Left ventricle myocardium inferior (tissue), 1 donor: ENCODE measurements at regions of chr18 and their contacts with region 1.

Region 1: DNA sequence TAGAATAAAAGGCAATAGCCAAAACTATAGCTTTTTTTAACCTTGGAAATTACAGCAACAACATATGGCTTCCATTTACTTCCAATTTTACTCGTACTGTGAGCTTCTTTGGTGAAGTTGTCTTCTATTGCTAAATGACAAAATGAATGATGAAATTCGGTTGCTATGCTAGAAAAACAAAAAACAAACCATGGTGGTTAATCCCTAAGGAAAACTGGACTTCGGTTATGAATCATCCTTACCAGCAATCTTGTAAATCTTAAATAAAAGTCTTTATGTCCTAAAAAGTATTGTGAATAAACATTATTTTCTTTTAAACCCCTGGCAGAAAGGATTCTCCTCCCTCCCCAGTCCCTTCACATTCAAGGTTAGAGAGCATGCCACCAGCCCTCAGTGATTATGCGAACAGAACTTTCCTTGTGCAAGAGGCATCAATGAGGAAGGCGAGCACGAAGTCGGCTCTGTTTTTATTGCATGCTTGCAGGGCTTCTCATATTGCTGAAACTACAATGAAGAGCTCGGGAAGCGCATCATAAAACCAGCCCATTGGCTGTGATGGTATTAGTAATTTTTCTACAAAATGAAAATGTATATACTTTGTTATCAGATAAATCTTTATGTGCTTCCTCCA is 62.9 kb downstream of the ZNF521 start:
- DNase-seq: no peak
- H3K4me3 ChIP-seq: no peak overlapping the region
- H3K27ac ChIP-seq: peak overlapping the region; percentile 87
- H3K4me1 ChIP-seq: peaks cover 53% of the 10 kb centered on the region
- H3K27me3 ChIP-seq: no peaks in the 10 kb centered on the region
- CTCF ChIP-seq: no peak

Region 2: DNA sequence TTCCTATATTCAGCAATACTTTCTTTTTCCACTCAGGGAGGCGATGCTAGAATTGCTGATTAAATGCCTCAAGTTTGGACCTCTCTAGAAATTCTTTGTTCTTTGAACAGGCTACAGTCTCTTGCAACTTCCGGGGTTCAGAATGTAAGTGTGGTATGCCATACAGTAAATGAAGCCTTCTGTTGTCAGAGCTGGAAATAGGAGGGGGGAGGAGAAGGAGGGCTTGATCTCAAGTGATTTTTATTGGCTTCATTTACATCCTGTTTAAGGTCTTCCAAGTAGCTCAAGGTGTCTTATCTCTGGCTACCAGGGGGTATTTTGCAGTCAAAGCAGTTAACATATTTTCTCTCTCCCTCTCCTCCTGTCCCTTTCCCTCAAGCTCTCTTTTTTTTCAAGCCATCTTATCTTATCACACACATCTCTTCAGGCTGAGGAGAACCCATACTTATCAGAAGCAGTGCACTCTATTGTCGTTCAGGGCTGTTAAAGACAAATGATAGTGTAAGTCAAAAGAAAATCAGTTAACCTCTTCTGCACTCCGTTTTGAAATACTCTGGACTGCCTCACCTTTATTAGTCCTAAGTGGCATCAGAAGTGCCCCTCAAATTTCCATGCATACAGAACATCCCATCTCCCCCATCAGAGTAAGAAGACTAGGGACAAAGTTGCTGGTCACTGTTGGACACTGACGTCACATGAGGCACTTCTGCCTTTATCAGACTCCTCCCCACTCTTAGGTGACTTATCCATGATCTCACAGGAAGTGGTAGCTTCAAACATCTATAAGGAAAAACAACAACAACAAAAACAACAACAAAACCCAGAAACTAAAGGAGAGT is 49.3 kb before region 1 on chr18:
- intact Hi-C with region 1: loop called (anchors 5 kb)
- DNase-seq: no peak
- H3K4me3 ChIP-seq: no peak overlapping the region
- H3K27ac ChIP-seq: no peak overlapping the region
- H3K4me1 ChIP-seq: peaks cover 60% of the 10 kb centered on the region
- H3K27me3 ChIP-seq: no peaks in the 10 kb centered on the region
- CTCF ChIP-seq: no peak

Region 3: GRCh38 chr18:25349131-25349925 is 60.2 kb after region 1 on chr18:
- intact Hi-C with region 1: loop called (anchors 10 kb)
- DNase-seq: peak; percentile 55
- H3K4me3 ChIP-seq: peak overlapping the region; percentile 81
- H3K27ac ChIP-seq: peak overlapping the region; percentile 96
- H3K4me1 ChIP-seq: peaks cover 66% of the 10 kb centered on the region
- H3K27me3 ChIP-seq: no peaks in the 10 kb centered on the region
- CTCF ChIP-seq: no peak

Region 4: DNA sequence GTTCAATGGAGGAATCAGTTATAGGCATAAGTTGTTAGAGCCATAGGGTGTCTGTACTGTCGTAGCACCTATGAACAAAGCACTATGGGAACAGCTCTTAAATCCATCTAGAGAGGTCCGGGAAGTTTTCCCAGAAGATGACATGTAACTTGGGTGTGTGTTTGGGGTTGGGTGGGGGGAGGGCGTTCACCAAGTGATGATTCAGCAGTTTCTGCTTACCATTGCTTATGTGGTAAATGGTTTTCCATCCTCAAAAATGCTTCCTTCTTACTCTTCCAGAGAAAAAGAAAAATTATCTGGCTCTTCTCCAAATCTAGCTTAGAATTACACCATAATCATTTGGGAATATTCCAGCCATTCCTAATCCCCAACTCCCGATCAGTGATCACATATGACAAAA is 424.0 kb after region 1 on chr18:
- intact Hi-C with region 1: no loop called
- DNase-seq: no peak
- H3K4me3 ChIP-seq: no peak overlapping the region
- H3K27ac ChIP-seq: no peak overlapping the region
- H3K4me1 ChIP-seq: no peaks in the 10 kb centered on the region
- H3K27me3 ChIP-seq: peaks cover 11% of the 10 kb centered on the region
- CTCF ChIP-seq: no peak